BJ (cell line): ENCODE measurements at regions of chr9 and their contacts with region 1.

Region 1: GRCh38 chr9:79395755-79396154 is 176.0 kb upstream of the TLE4 start:
- DNase-seq: no peak
- H3K4me3 ChIP-seq: no peak overlapping the region
- H3K27me3 ChIP-seq: no peaks in the 10 kb centered on the region
- CTCF ChIP-seq: no peak

Region 2: GRCh38 chr9:79116041-79116440 is 279.7 kb before region 1 on chr9:
- CTCF ChIA-PET with region 1: no interaction called
- POLR2A ChIA-PET with region 1: interaction called, 10 read pairs
- DNase-seq: no peak
- H3K4me3 ChIP-seq: no peak overlapping the region
- H3K27me3 ChIP-seq: no peaks in the 10 kb centered on the region
- CTCF ChIP-seq: no peak